ENCODE measurements at regions of chr21 and their contacts with region 1.

Region 1: DNA sequence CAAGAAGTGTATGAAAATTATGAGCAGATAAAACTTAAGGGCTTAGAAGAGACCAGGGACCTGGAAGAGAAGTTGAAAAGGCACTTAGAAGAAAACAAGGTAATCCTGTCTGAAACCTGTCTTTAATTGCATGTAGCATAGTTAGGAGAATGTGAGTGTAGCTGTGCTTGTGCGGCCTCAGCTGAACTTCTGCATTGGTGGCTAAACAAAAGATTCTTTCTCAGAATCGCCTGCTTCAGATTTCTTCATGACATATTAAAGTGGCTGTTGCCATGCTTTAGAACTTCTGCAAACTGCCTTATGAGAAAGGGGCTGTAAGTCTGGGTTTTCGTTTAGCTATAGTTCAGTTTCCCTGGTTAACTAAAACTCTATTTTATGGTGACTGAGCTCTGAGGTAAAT is 94.5 kb downstream of the VPS26C start:
- DNase-seq: no peak
- ATAC-seq: no peak
- H3K4me3 ChIP-seq: no peak overlapping the region
- H3K4me3 Mint-ChIP-seq: no peak overlapping the region
- H3K27ac ChIP-seq: no peak overlapping the region
- H3K27ac Mint-ChIP-seq: no peak overlapping the region
- H3K4me1 ChIP-seq: no peaks in the 10 kb centered on the region
- H3K4me1 Mint-ChIP-seq: no peaks in the 10 kb centered on the region
- H3K27me3 ChIP-seq: no peaks in the 10 kb centered on the region
- H3K27me3 Mint-ChIP-seq: no peaks in the 10 kb centered on the region
- CTCF ChIP-seq: no peak

Region 2: GRCh38 chr21:37636152-37636860 is 463.7 kb after region 1 on chr21:
- CTCF ChIA-PET with region 1: no interaction called
- POLR2A ChIA-PET with region 1: no interaction called
- intact Hi-C with region 1: loop called (anchors 5 kb)
- DNase-seq: no peak
- ATAC-seq: no peak
- H3K4me3 ChIP-seq: no peak overlapping the region
- H3K4me3 Mint-ChIP-seq: no peak overlapping the region
- H3K27ac ChIP-seq: no peak overlapping the region
- H3K27ac Mint-ChIP-seq: no peak overlapping the region
- H3K4me1 ChIP-seq: peaks cover 0 to 3% of the 10 kb centered on the region in 2 donors
- H3K4me1 Mint-ChIP-seq: peaks cover 5% of the 10 kb centered on the region
- H3K27me3 ChIP-seq: peaks cover 0 to 9% (median 5%) of the 10 kb centered on the region in 4 experiments
- H3K27me3 Mint-ChIP-seq: peaks cover 48% of the 10 kb centered on the region
- CTCF ChIP-seq: no peak

Measured in B cell (primary cell).